Naive thymus-derived CD4-positive, alpha-beta T cell (primary cell): ENCODE measurements at regions of chr16 and their contacts with region 1.

Region 1: DNA sequence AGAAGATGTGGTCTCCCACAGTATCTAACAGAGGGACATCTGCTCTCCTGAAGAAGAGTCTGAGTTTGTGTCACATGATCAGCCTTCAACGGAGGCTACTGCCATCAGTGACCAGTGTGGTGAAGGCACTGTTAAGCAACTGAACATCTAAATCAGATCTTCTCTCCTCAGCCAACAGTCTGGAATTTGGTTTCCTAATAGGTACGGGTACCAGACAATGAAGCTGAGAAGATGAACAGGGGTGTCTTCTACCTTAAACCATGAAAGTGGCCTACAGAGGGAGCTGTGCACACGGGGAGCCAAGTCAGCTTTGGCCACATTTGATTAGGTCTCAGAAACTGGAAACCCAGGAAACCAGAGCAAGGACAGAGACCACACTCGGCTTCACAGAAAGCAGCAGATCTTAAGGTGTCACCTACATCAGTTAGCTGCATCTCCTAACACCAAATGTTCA is 41.8 kb downstream of the BRD7 start:
- DNase-seq: peak in 8 of 9 donors; percentile 53 to 89 (median 78)
- ATAC-seq: peak; percentile 97
- H3K4me3 ChIP-seq: no peak overlapping the region
- H3K4me3 Mint-ChIP-seq: peak overlapping the region in 8 of 10 donors; percentile 8 to 57 (median 26)
- H3K27ac ChIP-seq: peak overlapping the region; percentile 44
- H3K27ac Mint-ChIP-seq: peak overlapping the region; percentile 54 to 94 (median 81)
- H3K4me1 ChIP-seq: peaks cover 10 to 34% of the 10 kb centered on the region in 2 donors
- H3K4me1 Mint-ChIP-seq: peaks cover 37 to 62% (median 49%) of the 10 kb centered on the region in 7 donors
- H3K27me3 ChIP-seq: no peaks in the 10 kb centered on the region
- H3K27me3 Mint-ChIP-seq: no peaks in the 10 kb centered on the region

Region 2: GRCh38 chr16:50313596-50314478 is 13.1 kb before region 1 on chr16:
- CTCF ChIA-PET with region 1: interaction called, 10 read pairs
- POLR2A ChIA-PET with region 1: interaction called, 8 read pairs
- intact Hi-C with region 1: no loop called
- DNase-seq: peak in 8 of 9 donors; percentile 25 to 48 (median 35)
- ATAC-seq: peak; percentile 88
- H3K4me3 ChIP-seq: no peak overlapping the region
- H3K4me3 Mint-ChIP-seq: peak overlapping the region; percentile 6 to 72 (median 52)
- H3K27ac ChIP-seq: peak overlapping the region; percentile 43
- H3K27ac Mint-ChIP-seq: peak overlapping the region; percentile 81 to 93 (median 89)
- H3K4me1 ChIP-seq: no peaks in the 10 kb centered on the region
- H3K4me1 Mint-ChIP-seq: peaks cover 14 to 36% (median 25%) of the 10 kb centered on the region in 7 donors
- H3K27me3 ChIP-seq: no peaks in the 10 kb centered on the region
- H3K27me3 Mint-ChIP-seq: no peaks in the 10 kb centered on the region

Region 3: DNA sequence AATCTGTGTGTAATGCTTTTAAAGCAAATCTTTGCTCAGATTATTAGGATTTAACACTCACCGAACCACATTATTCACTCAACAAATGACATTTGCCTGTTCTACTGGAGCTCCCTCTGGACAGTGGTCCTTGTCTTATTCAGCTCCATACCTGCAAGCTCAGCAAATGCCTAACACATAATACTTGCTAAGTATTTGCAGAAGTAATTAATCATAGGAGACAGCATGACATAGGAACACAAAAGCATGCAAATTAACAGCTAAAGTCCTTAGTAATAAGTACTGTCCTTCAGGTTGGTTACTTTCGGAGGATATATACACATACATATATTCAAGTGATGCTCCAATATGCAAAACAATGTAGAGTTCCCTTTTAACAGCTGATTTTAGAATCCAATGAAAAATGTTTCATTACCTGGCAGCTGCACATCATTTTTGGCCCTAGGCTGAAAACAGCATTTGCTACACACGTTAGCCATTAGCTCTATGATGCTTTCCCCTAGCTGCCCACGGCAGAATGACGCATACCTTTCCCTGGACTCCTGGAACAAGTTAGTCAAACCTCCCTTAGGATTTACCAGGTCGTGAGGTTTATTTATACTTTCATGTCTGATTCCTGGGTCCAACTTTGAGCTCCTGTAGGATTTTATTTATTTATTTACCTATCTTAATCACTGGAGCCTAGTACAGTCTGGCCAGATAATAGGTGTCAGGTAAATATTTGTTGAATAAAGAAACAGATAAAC is 33.2 kb after region 1 on chr16:
- CTCF ChIA-PET with region 1: interaction called, 203 read pairs
- POLR2A ChIA-PET with region 1: interaction called, 80 read pairs
- intact Hi-C with region 1: loop called (anchors 1 kb)
- DNase-seq: no peak
- ATAC-seq: no peak
- H3K4me3 ChIP-seq: no peak overlapping the region
- H3K4me3 Mint-ChIP-seq: peak overlapping the region in 2 of 10 donors; percentile 5 to 8
- H3K27ac ChIP-seq: peak overlapping the region; percentile 29
- H3K27ac Mint-ChIP-seq: peak overlapping the region in 8 of 9 donors; percentile 47 to 93 (median 72)
- H3K4me1 ChIP-seq: peaks cover 6 to 9% of the 10 kb centered on the region in 2 donors
- H3K4me1 Mint-ChIP-seq: peaks cover 23 to 84% (median 62%) of the 10 kb centered on the region in 7 donors
- H3K27me3 ChIP-seq: no peaks in the 10 kb centered on the region
- H3K27me3 Mint-ChIP-seq: no peaks in the 10 kb centered on the region

Region 4: DNA sequence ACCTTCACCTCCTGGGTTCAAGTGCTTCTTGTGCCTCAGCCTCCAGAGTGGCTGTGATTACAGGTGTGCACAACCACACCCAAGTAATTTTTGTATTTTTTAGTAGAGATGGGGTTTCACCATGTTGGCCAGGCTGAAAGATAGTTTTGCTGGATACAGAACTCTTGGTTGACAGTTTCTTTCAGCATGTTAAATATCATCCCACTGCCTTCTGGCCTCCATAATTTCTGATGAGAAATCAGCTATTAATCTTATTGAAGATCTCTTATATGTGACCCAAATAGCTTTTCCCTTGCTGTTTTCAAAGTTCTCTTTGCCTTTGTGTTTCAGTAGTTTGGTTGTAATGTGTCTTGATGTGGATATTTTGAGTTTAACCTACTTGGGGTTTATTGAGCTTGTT is 92.1 kb after region 1 on chr16:
- CTCF ChIA-PET with region 1: no interaction called
- POLR2A ChIA-PET with region 1: no interaction called
- intact Hi-C with region 1: no loop called
- DNase-seq: no peak
- ATAC-seq: no peak
- H3K4me3 ChIP-seq: no peak overlapping the region
- H3K4me3 Mint-ChIP-seq: no peak overlapping the region
- H3K27ac ChIP-seq: no peak overlapping the region
- H3K27ac Mint-ChIP-seq: no peak overlapping the region
- H3K4me1 ChIP-seq: no peaks in the 10 kb centered on the region
- H3K4me1 Mint-ChIP-seq: peaks cover 0 to 2% (median 0%) of the 10 kb centered on the region in 7 donors
- H3K27me3 ChIP-seq: no peaks in the 10 kb centered on the region
- H3K27me3 Mint-ChIP-seq: peaks cover 10 to 23% (median 16%) of the 10 kb centered on the region in 5 donors

Region 5: DNA sequence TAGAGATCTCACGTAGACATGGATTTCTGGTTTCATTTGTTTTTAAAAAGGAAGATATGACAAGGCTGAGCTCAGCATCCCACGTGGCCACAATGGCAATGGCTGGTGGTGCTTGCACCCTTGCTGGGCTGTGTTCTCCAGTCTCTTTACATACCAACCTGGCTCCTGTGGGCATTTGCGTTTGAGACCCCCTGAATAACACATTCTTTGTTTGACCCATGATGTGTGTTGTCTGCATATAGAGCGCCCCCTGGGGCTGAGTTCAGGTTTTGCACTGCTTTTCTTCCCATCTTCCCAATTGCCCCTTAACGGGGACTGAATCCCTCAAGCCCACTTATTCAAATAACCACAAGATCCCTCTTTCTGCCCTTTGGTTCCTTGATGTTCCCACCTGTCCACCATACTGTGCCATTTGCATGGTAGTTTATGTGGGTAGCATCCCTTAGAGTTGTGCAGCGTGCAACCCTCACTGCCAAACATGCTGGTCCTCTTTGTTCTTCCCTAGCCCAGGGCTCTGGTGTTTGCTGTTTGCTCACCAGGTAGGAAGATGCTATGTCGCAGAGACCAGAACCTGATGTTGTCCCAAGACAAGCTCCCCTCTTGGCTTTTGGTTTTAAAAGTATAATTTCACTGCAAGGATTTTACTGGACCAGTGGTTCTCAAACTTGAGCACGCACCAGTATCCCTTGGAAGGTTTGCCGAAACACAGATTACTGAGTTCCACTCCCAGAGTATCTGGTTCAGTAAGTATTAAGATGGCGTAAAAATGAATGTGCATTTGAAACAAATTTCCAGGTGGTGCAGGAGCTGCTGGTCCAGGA is 182.8 kb after region 1 on chr16:
- CTCF ChIA-PET with region 1: no interaction called
- POLR2A ChIA-PET with region 1: no interaction called
- intact Hi-C with region 1: loop called in 1 of 2 experiments (anchors 5 kb)
- DNase-seq: peak in 5 of 9 donors; percentile 1 to 40 (median 7)
- ATAC-seq: peak; percentile 45
- H3K4me3 ChIP-seq: no peak overlapping the region
- H3K4me3 Mint-ChIP-seq: no peak overlapping the region
- H3K27ac ChIP-seq: no peak overlapping the region
- H3K27ac Mint-ChIP-seq: peak overlapping the region in 1 of 9 donors; percentile 27
- H3K4me1 ChIP-seq: no peaks in the 10 kb centered on the region
- H3K4me1 Mint-ChIP-seq: peaks cover 0 to 8% (median 0%) of the 10 kb centered on the region in 7 donors
- H3K27me3 ChIP-seq: no peaks in the 10 kb centered on the region
- H3K27me3 Mint-ChIP-seq: peaks cover 0 to 17% (median 0%) of the 10 kb centered on the region in 5 donors

Region 6: DNA sequence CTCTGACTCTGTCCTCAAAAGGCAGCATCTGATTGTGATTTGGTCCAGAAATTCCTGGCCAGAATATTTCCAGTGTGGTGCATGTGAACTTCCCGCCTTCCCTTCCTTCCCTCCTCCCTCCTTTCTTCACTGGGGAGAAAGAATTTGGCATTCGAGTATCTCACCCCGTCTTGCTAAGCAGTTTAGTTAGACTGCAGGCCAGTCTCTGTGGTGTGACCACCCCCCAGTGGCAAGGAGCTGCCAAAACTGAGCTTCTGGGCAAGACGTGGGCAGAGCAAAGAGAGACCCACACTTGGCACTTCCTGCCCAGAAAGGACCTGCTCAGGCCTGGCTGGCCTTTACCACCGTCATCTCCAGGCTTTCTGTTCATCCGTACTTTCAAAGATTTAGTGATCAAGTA is 317.8 kb after region 1 on chr16:
- CTCF ChIA-PET with region 1: interaction called, 7 read pairs
- POLR2A ChIA-PET with region 1: no interaction called
- intact Hi-C with region 1: loop called in 1 of 2 experiments (anchors 1 kb)
- DNase-seq: peak in 6 of 9 donors; percentile 31 to 53 (median 48)
- ATAC-seq: peak; percentile 72
- H3K4me3 ChIP-seq: no peak overlapping the region
- H3K4me3 Mint-ChIP-seq: no peak overlapping the region
- H3K27ac ChIP-seq: no peak overlapping the region
- H3K27ac Mint-ChIP-seq: peak overlapping the region in 5 of 9 donors; percentile 0 to 39 (median 16)
- H3K4me1 ChIP-seq: no peaks in the 10 kb centered on the region
- H3K4me1 Mint-ChIP-seq: peaks cover 5 to 7% (median 6%) of the 10 kb centered on the region in 7 donors
- H3K27me3 ChIP-seq: no peaks in the 10 kb centered on the region
- H3K27me3 Mint-ChIP-seq: no peaks in the 10 kb centered on the region

Region 7: DNA sequence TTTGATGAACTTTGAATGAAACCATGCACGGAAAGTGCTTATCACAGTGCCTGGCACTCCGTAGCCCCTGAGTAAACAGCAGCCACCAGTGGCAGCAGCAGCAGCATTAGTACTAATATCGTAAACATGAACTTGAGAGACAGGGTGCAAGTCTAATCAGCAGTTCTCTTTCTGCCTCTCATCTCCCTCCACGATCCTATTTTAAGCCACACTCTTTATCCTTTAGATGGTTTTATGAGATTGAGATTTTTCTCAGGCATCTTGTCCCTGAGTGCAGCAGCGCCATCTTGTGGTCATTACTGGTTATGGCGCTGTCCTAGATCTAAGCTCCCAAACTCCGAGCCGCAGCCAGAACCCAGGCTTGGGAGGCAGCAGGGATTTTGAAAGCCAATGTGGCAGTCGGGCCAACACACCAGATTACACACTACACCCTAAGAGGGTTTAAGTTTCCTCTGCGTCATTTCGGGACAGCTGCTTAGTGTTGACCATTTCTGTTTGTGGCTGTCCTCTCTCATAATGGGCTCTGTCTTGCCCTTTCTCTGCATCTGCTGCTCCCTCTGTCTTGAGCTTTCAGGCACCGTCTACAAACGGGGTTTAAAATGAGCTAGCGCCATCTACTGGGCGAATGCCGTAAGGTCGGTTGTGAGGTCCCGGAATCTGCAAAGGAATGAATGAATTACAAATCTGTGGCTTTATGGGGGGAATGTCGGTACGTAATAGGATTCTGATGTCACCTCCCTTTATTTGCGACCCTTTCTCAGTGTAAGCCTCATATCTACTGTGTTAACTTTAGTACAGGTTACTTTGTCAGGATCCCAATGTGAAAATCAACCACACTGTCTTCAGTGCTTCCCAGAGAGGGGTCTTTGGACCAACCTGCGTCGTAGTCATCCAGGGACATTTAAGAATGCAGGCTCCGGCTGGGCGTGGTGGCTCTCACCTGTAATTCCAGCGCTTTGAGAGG is 479.4 kb after region 1 on chr16:
- CTCF ChIA-PET with region 1: interaction called, 12 read pairs
- POLR2A ChIA-PET with region 1: no interaction called
- intact Hi-C with region 1: loop called (anchors 1 kb)
- DNase-seq: peak; percentile 66 to 92 (median 89)
- ATAC-seq: peak; percentile 98
- H3K4me3 ChIP-seq: peak overlapping the region; percentile 34
- H3K4me3 Mint-ChIP-seq: peak overlapping the region; percentile 12 to 90 (median 80)
- H3K27ac ChIP-seq: no peak overlapping the region
- H3K27ac Mint-ChIP-seq: peak overlapping the region; percentile 15 to 92 (median 81)
- H3K4me1 ChIP-seq: peaks cover 3 to 5% of the 10 kb centered on the region in 2 donors
- H3K4me1 Mint-ChIP-seq: peaks cover 8 to 19% (median 13%) of the 10 kb centered on the region in 7 donors
- H3K27me3 ChIP-seq: no peaks in the 10 kb centered on the region
- H3K27me3 Mint-ChIP-seq: no peaks in the 10 kb centered on the region